Activated CD8-positive, alpha-beta T cell treated with anti-CD3 and anti-CD28 coated beads, Interleukin-2, amount 10 ng/mL, durations not matched to agents 7 days and 5 days (primary cell): ENCODE measurements at regions of chr2 and their contacts with region 1.

Region 1: DNA sequence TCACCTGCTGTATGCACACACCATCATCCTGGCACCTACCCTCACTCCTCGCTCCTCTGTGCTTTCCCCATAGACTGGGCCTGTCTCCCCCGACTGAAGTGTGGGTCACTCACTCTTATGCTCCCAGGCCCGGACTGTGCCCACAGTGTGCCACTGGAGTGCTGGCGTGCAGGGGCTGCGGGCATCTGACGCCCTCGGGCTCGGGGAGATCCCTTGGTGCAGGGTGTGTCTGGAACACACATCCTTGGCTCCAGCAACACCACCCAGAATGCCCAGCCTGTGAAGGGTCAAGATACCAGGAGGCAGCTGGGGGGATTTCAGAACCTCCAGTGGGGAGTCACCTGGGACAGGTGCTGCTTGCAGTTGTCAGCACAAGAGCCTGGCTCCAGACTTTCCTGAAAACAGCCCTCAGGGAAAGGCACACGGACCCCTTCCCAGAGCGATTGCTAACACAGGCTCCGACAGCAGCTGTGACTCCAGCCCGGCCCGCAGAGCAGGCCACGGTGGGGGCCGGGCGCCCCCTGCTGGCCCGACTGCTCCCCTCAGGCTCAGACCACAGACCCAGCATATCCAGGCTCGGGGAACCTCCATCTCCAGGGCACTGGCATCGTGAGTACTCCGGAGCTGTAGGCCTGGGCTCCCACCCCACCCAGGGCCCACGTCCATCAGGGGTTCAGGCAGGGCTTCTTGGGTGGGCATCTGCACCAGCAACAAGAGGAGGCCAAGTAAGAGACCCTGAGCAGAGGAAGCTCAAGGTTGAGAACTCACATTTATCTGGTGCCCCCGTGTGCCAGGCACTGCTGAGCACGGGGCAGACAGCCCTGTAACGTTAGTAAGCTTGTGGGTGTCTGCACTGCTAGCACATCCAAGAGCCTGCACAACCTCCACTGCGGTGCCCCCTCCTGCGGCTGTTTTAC is 8.6 kb downstream of the HS1BP3 start:
- DNase-seq: peak; percentile 78
- ATAC-seq: peak; percentile 97
- H3K4me3 Mint-ChIP-seq: no peak overlapping the region
- H3K27ac Mint-ChIP-seq: no peak overlapping the region
- H3K4me1 Mint-ChIP-seq: no peaks in the 10 kb centered on the region
- H3K27me3 Mint-ChIP-seq: no peaks in the 10 kb centered on the region

Region 2: GRCh38 chr2:20424300-20425290 is 217.7 kb before region 1 on chr2:
- CTCF ChIA-PET with region 1: interaction called, 12 read pairs
- POLR2A ChIA-PET with region 1: no interaction called
- DNase-seq: peak; percentile 43
- ATAC-seq: peak; percentile 56
- H3K4me3 Mint-ChIP-seq: peak overlapping the region; percentile 6
- H3K27ac Mint-ChIP-seq: peak overlapping the region; percentile 79
- H3K4me1 Mint-ChIP-seq: peaks cover 19% of the 10 kb centered on the region
- H3K27me3 Mint-ChIP-seq: peaks cover 6% of the 10 kb centered on the region

Region 3: GRCh38 chr2:20438334-20439192 is 203.8 kb before region 1 on chr2:
- CTCF ChIA-PET with region 1: interaction called, 60 read pairs
- POLR2A ChIA-PET with region 1: no interaction called
- DNase-seq: no peak
- ATAC-seq: no peak
- H3K4me3 Mint-ChIP-seq: no peak overlapping the region
- H3K27ac Mint-ChIP-seq: no peak overlapping the region
- H3K4me1 Mint-ChIP-seq: no peaks in the 10 kb centered on the region
- H3K27me3 Mint-ChIP-seq: peaks cover 30% of the 10 kb centered on the region

Region 4: DNA sequence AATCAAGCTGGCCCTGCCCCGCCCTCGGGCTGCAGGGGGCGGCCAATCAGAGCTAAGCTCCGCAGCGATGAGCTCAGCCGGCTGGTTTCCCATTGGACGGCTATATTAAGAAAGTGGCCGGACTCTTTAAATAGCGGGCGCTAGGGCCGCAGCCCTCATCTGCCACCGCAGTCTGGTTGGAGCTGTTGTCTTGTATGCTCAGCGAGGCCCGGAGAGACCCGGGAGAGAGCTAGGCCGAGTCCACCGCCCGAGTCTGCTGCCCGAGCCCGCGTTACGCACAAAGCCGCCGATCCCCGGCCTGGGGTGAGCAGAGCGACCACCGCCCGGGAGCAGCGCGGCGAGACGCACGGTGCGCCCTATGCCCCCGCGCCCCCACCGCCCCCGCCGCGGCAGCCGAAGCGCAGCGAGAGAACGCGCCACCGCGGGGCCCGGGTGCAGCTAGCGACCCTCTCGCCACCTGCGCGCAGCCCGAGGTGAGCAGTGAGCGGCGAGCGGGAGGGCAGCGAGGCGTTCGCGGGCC is 195.3 kb before region 1 on chr2 and contains the start of gene RHOB:
- CTCF ChIA-PET with region 1: interaction called, 60 read pairs
- POLR2A ChIA-PET with region 1: interaction called, 12 read pairs
- DNase-seq: peak; percentile 91
- ATAC-seq: peak; percentile 98
- H3K4me3 Mint-ChIP-seq: peak within 1 kb of the TSS; percentile 63
- H3K27ac Mint-ChIP-seq: peak within 1 kb of the TSS; percentile 43
- H3K4me1 Mint-ChIP-seq: peaks cover 4% of the 10 kb centered on the region
- H3K27me3 Mint-ChIP-seq: peaks cover 39% of the 10 kb centered on the region
- total RNA-seq, gene RHOB: 1.2 to 1.3 TPM